ENCODE measurements at regions of chr7 and their contacts with region 1.

Region 1: GRCh38 chr7:124550036-124550435 is 215.6 kb downstream of the GPR37 start:
- DNase-seq: no peak
- H3K4me3 ChIP-seq: no peak overlapping the region
- H3K27ac ChIP-seq: no peak overlapping the region
- H3K4me1 ChIP-seq: no peaks in the 10 kb centered on the region
- H3K27me3 ChIP-seq: no peaks in the 10 kb centered on the region
- CTCF ChIP-seq: no peak

Region 2: GRCh38 chr7:124618871-124619270 is 68.8 kb after region 1 on chr7:
- CTCF ChIA-PET with region 1: no interaction called
- dilution Hi-C with region 1: no loop called
- in situ Hi-C with region 1: no loop called
- intact Hi-C with region 1: loop called (anchors 10 kb)
- DNase-seq: no peak
- H3K4me3 ChIP-seq: no peak overlapping the region
- H3K27ac ChIP-seq: no peak overlapping the region
- H3K4me1 ChIP-seq: no peaks in the 10 kb centered on the region
- H3K27me3 ChIP-seq: no peaks in the 10 kb centered on the region
- CTCF ChIP-seq: no peak

Measured in mammary epithelial cell (primary cell).